Transverse colon (tissue), 4 donors: ENCODE measurements at regions of chr3 and their contacts with region 1.

Region 1: GRCh38 chr3:42090973-42091731 is at the start of gene TRAK1:
- DNase-seq: no peak
- H3K4me3 ChIP-seq: peak within 1 kb of the TSS in 2 of 4 donors; percentile 3 to 20
- H3K27ac ChIP-seq: peak within 1 kb of the TSS; percentile 47 to 72 (median 57)
- H3K4me1 ChIP-seq: peaks cover 0 to 22% (median 6%) of the 10 kb centered on the region in 4 donors
- H3K27me3 ChIP-seq: no peaks in the 10 kb centered on the region
- CTCF ChIP-seq: no peak
- EP300 ChIP-seq: no peak
- POLR2A ChIP-seq: no peak
- total RNA-seq, gene TRAK1: 91.7 to 247 (median 115) TPM

Region 2: DNA sequence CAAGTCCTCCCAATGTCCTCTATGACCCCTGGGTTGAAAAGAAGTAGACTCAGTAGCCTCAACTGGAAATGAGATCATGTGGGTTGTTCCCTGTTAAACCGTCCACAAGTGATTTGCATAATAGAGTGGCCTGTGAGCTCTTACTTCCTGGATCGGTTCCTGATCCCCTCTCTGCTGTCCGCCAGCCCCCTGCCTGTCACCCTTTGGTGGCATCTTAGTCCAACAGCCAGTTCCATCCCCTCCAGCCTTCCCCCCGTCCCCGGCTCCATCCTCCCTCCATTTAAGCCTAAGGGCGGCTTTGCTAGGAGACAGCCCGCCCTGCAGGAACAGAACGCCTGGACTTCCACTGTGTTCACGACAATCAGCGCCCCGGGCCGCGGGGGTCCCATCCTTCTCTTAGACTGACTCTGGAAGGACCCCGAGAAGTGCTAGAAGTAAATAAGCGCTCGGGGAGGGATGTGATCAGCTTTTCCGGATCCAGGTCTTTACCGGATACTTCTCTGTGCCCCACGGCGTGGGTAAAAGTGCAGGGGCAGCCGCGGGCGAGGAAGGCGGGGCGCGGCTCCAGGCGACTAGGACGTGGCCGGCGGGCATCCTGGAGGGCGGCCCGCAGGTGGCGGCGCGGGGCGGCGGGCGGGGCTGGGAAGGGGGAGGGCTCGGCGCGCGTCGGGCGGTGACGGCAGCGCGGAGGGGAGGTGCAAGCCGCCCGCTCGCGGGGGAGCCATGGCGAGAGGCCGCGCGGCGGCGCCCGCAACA is 78.0 kb before region 1 on chr3:
- in situ Hi-C with region 1: no loop called
- intact Hi-C with region 1: loop called (anchors 5 kb)
- DNase-seq: peak; percentile 86
- H3K4me3 ChIP-seq: peak overlapping the region; percentile 41 to 99 (median 85)
- H3K27ac ChIP-seq: peak overlapping the region; percentile 88 to 97 (median 94)
- H3K4me1 ChIP-seq: peaks cover 5 to 34% (median 27%) of the 10 kb centered on the region in 4 donors
- H3K27me3 ChIP-seq: no peaks in the 10 kb centered on the region
- CTCF ChIP-seq: no peak
- EP300 ChIP-seq: no peak
- POLR2A ChIP-seq: peak; percentile 79